ENCODE measurements at regions of chr6 and their contacts with region 1.

Region 1: GRCh38 chr6:16183187-16183664 is 54.3 kb downstream of the MYLIP start:
- DNase-seq: no peak
- ATAC-seq: peak; percentile 59

Region 2: DNA sequence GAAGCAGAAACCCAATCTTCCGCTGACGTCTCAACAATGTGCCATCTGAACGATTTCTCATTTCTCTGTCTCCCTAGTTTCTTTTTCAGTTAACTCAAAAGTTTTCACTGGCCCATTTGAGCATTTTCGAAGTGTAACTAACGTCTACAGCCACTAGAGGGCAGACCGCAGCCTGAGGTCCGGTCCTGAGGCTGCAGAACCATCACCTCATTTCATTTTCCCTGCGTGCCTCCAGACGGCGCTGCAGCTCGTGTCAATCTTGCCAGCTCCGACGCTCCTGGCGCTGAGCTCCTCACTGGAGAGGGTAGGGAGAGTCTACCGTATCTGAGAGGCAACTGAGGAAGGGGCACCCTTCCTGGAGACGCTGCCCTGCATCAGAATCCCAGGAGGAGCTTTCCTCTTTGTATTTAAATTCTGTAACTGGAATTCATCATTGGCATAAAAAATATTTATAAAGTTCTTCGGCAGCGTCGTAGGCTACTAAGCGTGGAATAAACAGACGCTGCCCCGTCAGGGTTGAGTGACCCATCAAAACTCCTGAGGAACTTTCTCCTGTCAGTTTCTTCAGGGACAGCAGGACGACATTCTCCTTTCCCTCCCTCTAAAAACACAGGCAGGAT is 491.9 kb before region 1 on chr6:
- intact Hi-C with region 1: loop called (anchors 10 kb)
- DNase-seq: peak; percentile 86
- ATAC-seq: peak; percentile 99

Region 3: DNA sequence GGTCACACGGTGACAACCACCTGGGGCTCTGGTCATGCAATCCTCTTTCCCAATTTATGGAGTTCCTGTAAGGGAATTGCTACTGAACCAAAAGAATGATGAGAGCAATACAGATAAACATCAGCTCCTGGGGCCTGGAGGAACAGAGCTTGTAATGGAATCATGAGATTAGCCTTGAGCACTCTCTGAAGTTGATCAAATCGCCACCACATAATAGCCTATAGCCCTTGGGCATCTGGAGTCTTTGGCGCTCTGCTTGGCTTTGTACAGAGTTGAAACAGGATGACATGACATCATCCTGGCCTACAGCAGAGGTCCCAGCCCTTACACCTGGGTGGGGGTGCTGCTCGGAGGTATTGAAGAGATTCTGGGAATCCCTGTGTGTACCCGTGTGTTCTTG is 366.1 kb before region 1 on chr6:
- intact Hi-C with region 1: no loop called
- DNase-seq: no peak
- ATAC-seq: no peak

Measured in left ventricle myocardium superior (tissue), 1 donor.